ENCODE measurements at regions of chr15 and their contacts with region 1.

Region 1: GRCh38 chr15:59492389-59493377 is 54.7 kb downstream of the FAM81A start:
- DNase-seq: peak; percentile 44
- H3K4me3 ChIP-seq: peak overlapping the region; percentile 22
- H3K27ac ChIP-seq: no peak overlapping the region
- H3K4me1 ChIP-seq: peaks cover 20% of the 10 kb centered on the region
- H3K27me3 ChIP-seq: no peaks in the 10 kb centered on the region
- CTCF ChIP-seq: peak; percentile 88

Region 2: DNA sequence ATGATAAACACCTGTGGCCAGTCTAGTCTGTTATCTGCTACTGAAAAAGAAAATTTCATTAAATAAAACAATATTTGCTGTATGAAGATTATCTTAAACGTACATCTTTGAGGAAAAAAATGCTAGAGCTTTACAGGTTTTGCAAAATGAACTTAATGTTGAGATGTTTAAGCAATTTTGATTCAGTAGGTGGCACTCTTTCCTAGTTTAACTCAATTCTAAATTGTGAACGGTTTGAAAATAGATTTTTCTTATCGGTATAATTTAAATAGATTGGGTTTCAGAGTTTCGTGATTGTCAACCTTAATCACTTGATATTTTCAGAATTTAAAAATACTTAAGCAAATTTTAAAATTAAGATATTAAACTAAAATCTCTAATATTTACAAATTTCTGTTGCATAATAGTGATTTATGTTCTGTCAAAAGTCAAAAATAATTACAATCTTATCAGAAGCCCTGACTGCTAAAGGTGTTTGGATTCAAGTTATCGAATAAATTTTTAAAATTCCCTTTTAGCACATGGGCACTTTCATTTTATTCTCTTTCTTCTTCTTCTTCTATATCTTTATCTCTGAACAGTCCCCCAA is 512.2 kb before region 1 on chr15:
- intact Hi-C with region 1: loop called (anchors 5 kb)
- DNase-seq: no peak
- H3K4me3 ChIP-seq: no peak overlapping the region
- H3K27ac ChIP-seq: no peak overlapping the region
- H3K4me1 ChIP-seq: peaks cover 3% of the 10 kb centered on the region
- H3K27me3 ChIP-seq: no peaks in the 10 kb centered on the region
- CTCF ChIP-seq: peak; percentile 70

Region 3: GRCh38 chr15:59160880-59161593 is 331.6 kb before region 1 on chr15:
- intact Hi-C with region 1: loop called (anchors 10 kb)
- DNase-seq: no peak
- H3K4me3 ChIP-seq: no peak overlapping the region
- H3K27ac ChIP-seq: no peak overlapping the region
- H3K4me1 ChIP-seq: no peaks in the 10 kb centered on the region
- H3K27me3 ChIP-seq: no peaks in the 10 kb centered on the region
- CTCF ChIP-seq: peak; percentile 43

Region 4: DNA sequence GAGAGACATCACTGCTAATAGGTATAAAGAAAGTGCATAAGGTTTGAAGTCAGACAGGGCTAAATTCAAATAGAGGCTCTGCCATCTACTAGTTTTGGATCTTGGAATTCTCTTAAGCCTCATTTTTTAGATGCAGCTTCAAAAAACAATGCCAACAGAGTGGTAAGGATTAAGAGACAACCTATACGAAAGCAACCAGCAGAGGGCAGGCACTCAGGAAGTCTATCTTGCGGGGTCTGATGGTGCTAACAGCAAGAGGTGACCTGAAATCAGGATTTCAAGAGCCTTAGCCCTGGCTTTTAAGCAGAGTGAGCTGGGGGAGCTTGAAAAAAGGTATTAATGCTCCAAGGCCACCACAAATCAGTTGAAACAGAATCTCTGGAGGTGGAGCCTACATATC is 245.3 kb before region 1 on chr15:
- intact Hi-C with region 1: loop called (anchors 5 kb)
- DNase-seq: no peak
- H3K4me3 ChIP-seq: no peak overlapping the region
- H3K27ac ChIP-seq: no peak overlapping the region
- H3K4me1 ChIP-seq: peaks cover 7% of the 10 kb centered on the region
- H3K27me3 ChIP-seq: no peaks in the 10 kb centered on the region
- CTCF ChIP-seq: peak; percentile 69

Measured in left ventricle myocardium inferior (tissue), 1 donor.